ENCODE measurements at regions of chr16 and their contacts with region 1.

Region 1: GRCh38 chr16:62974424-62974823 is 938.2 kb upstream of the CDH8 start:
- DNase-seq: no peak
- H3K4me3 Mint-ChIP-seq: no peak overlapping the region
- H3K27ac Mint-ChIP-seq: no peak overlapping the region
- H3K4me1 Mint-ChIP-seq: no peaks in the 10 kb centered on the region
- H3K27me3 Mint-ChIP-seq: no peaks in the 10 kb centered on the region

Region 2: DNA sequence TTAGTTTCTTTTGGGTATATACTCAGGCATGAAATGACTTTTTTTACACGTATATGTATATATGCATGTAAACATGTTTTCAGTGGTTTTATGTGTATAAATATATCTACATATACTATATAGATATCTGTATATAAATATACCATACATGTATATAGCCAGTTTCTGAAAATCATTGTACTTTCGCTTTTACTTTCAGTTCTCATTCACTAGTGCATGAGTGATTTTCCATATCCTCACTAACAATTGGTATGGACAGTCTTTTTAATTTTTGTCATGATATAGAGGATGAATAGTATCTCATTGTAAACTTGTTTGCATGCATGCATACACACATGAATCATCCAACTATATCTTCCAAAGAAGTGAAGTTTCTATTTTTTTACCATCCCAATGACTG is 61.1 kb before region 1 on chr16:
- CTCF ChIA-PET with region 1: no interaction called
- intact Hi-C with region 1: loop called (anchors 2 kb)
- DNase-seq: no peak
- H3K4me3 Mint-ChIP-seq: no peak overlapping the region
- H3K27ac Mint-ChIP-seq: no peak overlapping the region
- H3K4me1 Mint-ChIP-seq: no peaks in the 10 kb centered on the region
- H3K27me3 Mint-ChIP-seq: no peaks in the 10 kb centered on the region

Region 3: DNA sequence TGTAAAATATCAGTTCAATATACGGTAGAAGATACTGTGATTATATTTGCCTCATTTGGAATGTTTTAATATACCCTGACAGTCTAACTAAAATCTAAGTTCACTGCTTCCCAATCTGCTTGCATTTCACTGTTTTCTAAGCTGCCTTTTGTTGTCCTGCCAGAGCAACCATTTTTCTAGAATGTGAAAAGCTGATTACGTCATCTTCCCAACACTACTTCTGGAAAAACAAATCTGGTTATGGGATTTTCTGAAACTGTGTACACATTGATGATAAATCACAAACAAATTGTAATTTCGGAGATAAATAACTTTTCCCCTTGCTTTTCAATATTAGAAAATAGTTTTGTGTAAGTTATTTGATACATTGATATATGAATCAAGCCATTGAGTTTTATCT is 618.4 kb after region 1 on chr16:
- CTCF ChIA-PET with region 1: no interaction called
- intact Hi-C with region 1: no loop called
- DNase-seq: no peak
- H3K4me3 Mint-ChIP-seq: no peak overlapping the region
- H3K27ac Mint-ChIP-seq: no peak overlapping the region
- H3K4me1 Mint-ChIP-seq: no peaks in the 10 kb centered on the region
- H3K27me3 Mint-ChIP-seq: no peaks in the 10 kb centered on the region

Measured in activated naive CD4-positive, alpha-beta T cell treated with anti-CD3 and anti-CD28 coated beads for 36 hours (primary cell).